ENCODE measurements at regions of chr9 and their contacts with region 1.

Region 1: GRCh38 chr9:1179338-1179737 is 129.2 kb downstream of the DMRT2 start:
- DNase-seq: no peak
- H3K4me3 ChIP-seq: no peak overlapping the region
- H3K27ac ChIP-seq: no peak overlapping the region
- H3K4me1 ChIP-seq: no peaks in the 10 kb centered on the region
- H3K27me3 ChIP-seq: no peaks in the 10 kb centered on the region
- CTCF ChIP-seq: no peak

Region 2: GRCh38 chr9:1236061-1236460 is 56.7 kb after region 1 on chr9:
- CTCF ChIA-PET with region 1: no interaction called
- dilution Hi-C with region 1: loop called (anchors 5 kb)
- in situ Hi-C with region 1: no loop called
- intact Hi-C with region 1: no loop called
- DNase-seq: no peak
- H3K4me3 ChIP-seq: no peak overlapping the region
- H3K27ac ChIP-seq: no peak overlapping the region
- H3K4me1 ChIP-seq: no peaks in the 10 kb centered on the region
- H3K27me3 ChIP-seq: no peaks in the 10 kb centered on the region
- CTCF ChIP-seq: no peak

Measured in mammary epithelial cell (primary cell).